ENCODE measurements at regions of chr6 and their contacts with region 1.

Region 1: GRCh38 chr6:71533939-71534379 is 245.3 kb downstream of the OGFRL1 start:
- DNase-seq: peak; percentile 49
- H3K4me3 Mint-ChIP-seq: no peak overlapping the region
- H3K27ac Mint-ChIP-seq: no peak overlapping the region
- H3K4me1 Mint-ChIP-seq: peaks cover 53% of the 10 kb centered on the region
- H3K27me3 Mint-ChIP-seq: no peaks in the 10 kb centered on the region
- CTCF ChIP-seq: peak; percentile 77

Region 2: DNA sequence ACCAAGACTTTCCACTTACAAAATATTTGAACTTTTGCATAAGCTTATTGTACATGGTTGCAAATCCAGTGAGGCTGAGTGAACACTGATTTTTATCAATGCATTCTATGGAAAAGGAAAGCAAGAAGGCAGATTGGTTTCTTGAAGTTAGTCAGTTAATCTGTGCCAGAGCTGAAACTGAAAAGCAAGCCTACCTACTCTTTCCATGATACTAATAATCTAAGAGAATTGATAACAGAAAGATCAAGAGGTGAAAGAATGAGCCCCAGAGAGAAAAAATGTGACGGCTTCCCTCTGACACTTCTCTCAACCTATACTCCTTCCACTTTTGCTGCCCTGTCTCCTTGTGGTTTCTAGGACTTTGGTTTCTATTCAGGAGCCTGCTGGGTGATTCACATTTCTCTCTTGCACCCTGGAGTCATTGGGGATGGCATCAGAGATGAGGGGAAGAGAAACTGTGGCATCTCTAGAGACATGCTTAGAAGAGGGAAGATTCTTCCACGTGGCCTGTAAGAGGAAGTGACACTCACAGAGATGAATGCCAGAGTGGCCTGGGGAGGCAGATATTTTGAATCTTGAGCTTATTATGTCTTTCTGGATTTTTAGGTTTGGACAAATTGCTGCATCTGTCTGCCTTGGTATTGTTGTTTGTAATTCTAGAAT is 193.8 kb after region 1 on chr6:
- CTCF ChIA-PET with region 1: no interaction called
- intact Hi-C with region 1: loop called (anchors 5 kb)
- DNase-seq: no peak
- H3K4me3 Mint-ChIP-seq: no peak overlapping the region
- H3K27ac Mint-ChIP-seq: no peak overlapping the region
- H3K4me1 Mint-ChIP-seq: peaks cover 8% of the 10 kb centered on the region
- H3K27me3 Mint-ChIP-seq: no peaks in the 10 kb centered on the region
- CTCF ChIP-seq: no peak